ENCODE measurements at regions of chr3 and their contacts with region 1.

Region 1: DNA sequence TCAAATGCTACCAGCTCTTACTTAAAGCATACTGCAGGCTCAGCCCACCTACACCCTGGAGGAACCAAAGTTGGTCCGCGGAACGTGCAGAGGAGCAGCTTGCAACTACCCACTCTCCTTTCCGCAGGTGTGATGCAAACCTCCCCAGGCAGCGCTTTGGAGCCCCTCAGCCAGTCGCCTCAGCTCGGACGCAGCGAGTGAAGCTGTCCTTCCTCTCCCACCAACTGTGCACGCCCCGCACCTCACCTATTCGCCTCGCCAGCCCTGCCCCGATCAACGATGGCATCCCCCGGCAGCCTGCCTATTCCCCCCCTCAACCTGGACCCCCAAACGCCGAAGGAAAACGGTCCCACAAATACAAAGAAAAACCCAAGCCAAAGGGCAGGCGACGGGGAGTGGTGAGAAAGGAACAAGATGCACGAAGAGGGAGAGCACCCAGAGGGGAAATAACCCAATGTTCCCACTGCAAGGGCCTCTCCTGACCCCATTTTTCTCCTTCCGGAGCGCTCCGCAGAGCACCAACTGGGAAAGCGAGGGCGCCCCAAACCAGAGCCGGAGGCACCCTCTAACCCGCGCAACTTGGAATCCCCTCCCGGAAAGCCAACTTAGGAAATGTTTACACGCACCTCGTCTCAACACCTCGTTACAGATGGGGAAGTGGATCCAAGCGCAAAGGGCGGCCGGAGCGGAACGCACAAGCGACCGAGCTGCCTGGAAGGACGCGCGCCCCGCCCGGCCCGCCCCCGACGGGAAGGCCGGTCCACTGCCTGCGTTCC is 665 bp downstream of the GLB1 start:
- DNase-seq: peak; percentile 86
- H3K4me3 Mint-ChIP-seq: peak overlapping the region; percentile 99
- H3K27ac Mint-ChIP-seq: peak overlapping the region; percentile 90
- H3K4me1 Mint-ChIP-seq: peaks cover 38% of the 10 kb centered on the region
- H3K27me3 Mint-ChIP-seq: peaks cover 2% of the 10 kb centered on the region

Region 2: GRCh38 chr3:33054100-33055092 is 41.9 kb before region 1 on chr3:
- intact Hi-C with region 1: no loop called
- DNase-seq: peak; percentile 63
- H3K4me3 Mint-ChIP-seq: peak overlapping the region; percentile 54
- H3K27ac Mint-ChIP-seq: peak overlapping the region; percentile 92
- H3K4me1 Mint-ChIP-seq: peaks cover 65% of the 10 kb centered on the region
- H3K27me3 Mint-ChIP-seq: no peaks in the 10 kb centered on the region

Region 3: GRCh38 chr3:33113772-33114621 is 17.7 kb after region 1 on chr3 and contains the start of gene CRTAP:
- intact Hi-C with region 1: loop called (anchors 1 kb)
- DNase-seq: peak; percentile 95
- H3K4me3 Mint-ChIP-seq: peak within 1 kb of the TSS; percentile 84
- H3K27ac Mint-ChIP-seq: peak within 1 kb of the TSS; percentile 81
- H3K4me1 Mint-ChIP-seq: peaks cover 16% of the 10 kb centered on the region
- H3K27me3 Mint-ChIP-seq: peaks cover 2% of the 10 kb centered on the region
- total RNA-seq, gene CRTAP: 33.1 and 34.2 TPM in 2 replicates